ENCODE measurements at regions of chr12 and their contacts with region 1.

Region 1: GRCh38 chr12:53005986-53006809 is at the start of gene EIF4B:
- DNase-seq: peak; percentile 100
- ATAC-seq: peak; percentile 95 to 97 (median 96)
- H3K4me3 ChIP-seq: peak within 1 kb of the TSS; percentile 97
- H3K27ac ChIP-seq: peak within 1 kb of the TSS; percentile 97
- H3K4me1 ChIP-seq: peaks cover 50% of the 10 kb centered on the region
- H3K27me3 ChIP-seq: no peaks in the 10 kb centered on the region
- CTCF ChIP-seq: no peak
- total RNA-seq, gene EIF4B: 565 to 669 (median 617) TPM

Region 2: DNA sequence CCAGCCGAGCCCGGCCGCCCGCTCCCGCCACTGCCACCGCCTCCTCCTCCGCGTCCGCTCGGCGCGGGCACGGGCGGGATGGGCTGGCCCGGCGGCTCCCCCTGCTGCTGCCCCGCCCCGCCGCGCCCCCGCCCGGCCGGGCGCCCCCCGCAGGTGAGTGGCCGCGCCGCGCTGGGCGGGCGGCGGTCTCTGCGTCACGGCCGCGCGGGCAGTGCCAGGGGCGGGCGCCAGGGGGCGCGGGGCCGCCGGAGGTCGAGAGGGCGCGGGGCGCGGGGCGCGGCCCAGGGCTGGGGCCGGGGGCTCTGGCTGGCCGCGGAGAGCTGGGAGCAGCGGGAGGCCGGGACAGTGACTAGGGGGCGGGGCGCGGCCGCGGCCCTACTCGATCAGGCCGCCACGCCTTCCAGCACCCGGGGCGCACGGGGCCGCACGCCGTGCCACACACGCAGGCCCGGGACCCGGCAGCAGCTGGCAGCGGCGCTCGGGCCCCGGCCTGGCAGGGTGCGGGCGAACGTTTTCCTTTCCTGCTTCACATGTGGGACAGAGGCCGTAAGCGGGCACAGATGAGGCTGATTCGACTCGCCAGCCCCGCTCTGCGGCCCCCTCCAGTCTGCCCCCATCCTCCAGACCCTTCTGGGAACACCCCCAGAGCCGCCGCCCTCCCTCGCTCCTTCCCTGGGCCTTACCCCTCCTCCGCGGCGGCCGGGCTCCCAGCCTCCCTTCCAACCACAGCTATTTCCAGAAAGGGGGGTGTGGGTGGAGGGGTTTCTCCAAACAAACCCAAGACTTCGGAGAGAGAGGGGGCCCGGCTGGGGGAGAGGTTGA is 41.2 kb after region 1 on chr12:
- intact Hi-C with region 1: loop called in 1 of 2 experiments (anchors 5 kb)
- DNase-seq: peak; percentile 88 to 91
- ATAC-seq: peak; percentile 19 to 46 (median 28)
- H3K4me3 ChIP-seq: peak overlapping the region; percentile 86
- H3K27ac ChIP-seq: peak overlapping the region; percentile 98
- H3K4me1 ChIP-seq: peaks cover 45% of the 10 kb centered on the region
- H3K27me3 ChIP-seq: no peaks in the 10 kb centered on the region
- CTCF ChIP-seq: peak; percentile 48